HEK293 (cell line): ENCODE measurements at regions of chr13 and their contacts with region 1.

Region 1: DNA sequence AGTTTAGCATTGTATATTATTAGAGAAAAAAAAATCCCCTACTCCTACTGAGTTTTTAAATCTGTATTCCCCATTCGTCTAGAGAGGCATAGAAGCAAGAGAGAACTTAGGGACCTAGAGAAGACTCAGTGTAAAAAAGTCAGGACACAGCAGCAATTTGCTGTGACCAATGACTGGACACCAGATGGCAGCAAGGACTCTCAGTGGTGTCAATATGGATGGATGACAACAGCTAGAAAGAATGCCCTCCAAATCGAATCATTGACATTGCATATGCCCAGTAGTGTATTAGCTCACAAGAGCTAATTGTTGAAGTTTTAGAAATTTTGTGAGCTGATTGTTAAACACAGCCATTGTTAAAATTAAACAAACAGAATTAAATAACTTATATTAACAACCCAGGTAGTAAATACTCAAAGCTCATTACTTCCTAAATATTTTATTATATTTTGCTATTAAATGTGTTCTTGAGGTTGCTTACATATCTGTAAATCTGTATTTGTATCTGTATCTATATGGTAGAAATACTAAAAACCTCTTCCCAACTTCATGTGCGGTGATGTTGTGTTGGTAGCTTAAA is 43.9 kb downstream of the SIAH3 start:
- H3K4me3 ChIP-seq: no peak overlapping the region
- H3K27ac ChIP-seq: no peak overlapping the region
- H3K4me1 ChIP-seq: no peaks in the 10 kb centered on the region
- CTCF ChIP-seq: no peak; the same call in 1 of the 2 replicates

Region 2: GRCh38 chr13:46126552-46127357 is 319.1 kb after region 1 on chr13:
- CTCF ChIA-PET with region 1: interaction called, 22 read pairs
- POLR2A ChIA-PET with region 1: no interaction called
- H3K4me3 ChIP-seq: no peak overlapping the region
- H3K27ac ChIP-seq: no peak overlapping the region
- H3K4me1 ChIP-seq: no peaks in the 10 kb centered on the region
- CTCF ChIP-seq: no peak; the same call in 1 of the 2 replicates